PC-3 (cell line): ENCODE measurements at regions of chr17 and their contacts with region 1.

Region 1: DNA sequence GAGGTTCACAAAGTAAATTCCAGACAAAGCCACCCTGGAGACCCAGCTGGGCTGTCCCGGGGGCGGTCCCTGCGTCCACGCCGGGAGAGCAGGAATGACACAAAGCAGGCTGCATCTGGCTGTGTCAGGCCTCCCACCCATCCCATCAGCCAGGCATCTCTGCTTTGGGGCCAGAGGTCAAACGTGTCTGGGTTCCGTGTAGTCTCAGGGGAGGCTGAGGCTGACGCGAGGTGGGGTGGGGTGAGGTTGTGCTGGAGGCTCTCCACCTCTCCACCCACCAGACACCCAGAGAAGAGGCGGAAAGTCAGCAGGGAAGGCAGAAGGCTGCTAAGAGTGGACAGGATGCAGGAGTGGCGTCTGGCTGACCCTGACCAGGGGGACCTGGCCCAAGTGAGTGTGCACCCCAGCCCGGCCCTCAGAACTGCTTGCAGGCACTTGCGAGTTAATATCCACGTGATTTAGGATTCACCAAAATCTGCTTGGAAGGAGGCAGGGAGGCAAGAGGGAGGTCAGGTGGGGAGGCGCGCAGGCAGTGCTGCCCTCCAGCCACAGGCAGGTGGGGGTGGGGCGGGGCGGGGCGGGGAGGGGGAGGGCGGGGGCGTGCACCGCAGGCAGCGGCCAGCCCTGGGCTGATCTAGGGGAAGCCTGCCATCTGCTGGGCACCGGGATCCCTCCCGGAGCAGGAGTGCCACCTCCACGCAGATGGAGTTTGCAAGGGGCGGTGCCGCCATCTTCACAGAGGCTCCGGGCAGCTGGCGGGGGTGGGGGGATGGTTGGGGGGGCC is 44.3 kb downstream of the TBC1D16 start:
- DNase-seq: peak; percentile 92
- ATAC-seq: peak; percentile 77
- H3K4me3 ChIP-seq: peak overlapping the region; percentile 74
- H3K27ac ChIP-seq: no peak overlapping the region
- H3K4me1 ChIP-seq: peaks cover 43% of the 10 kb centered on the region
- H3K27me3 ChIP-seq: no peaks in the 10 kb centered on the region
- CTCF ChIP-seq: peak; percentile 42

Region 2: GRCh38 chr17:79810130-79811010 is 181.0 kb before region 1 on chr17:
- CTCF ChIA-PET with region 1: interaction called, 3 read pairs
- POLR2A ChIA-PET with region 1: no interaction called
- intact Hi-C with region 1: loop called (anchors 1 kb)
- DNase-seq: peak; percentile 93
- ATAC-seq: peak; percentile 81
- H3K4me3 ChIP-seq: peak overlapping the region; percentile 59
- H3K27ac ChIP-seq: no peak overlapping the region
- H3K4me1 ChIP-seq: peaks cover 29% of the 10 kb centered on the region
- H3K27me3 ChIP-seq: peaks cover 62% of the 10 kb centered on the region
- CTCF ChIP-seq: no peak

Region 3: GRCh38 chr17:79844869-79845600 is 146.3 kb before region 1 on chr17:
- CTCF ChIA-PET with region 1: interaction called, 9 read pairs
- POLR2A ChIA-PET with region 1: no interaction called
- intact Hi-C with region 1: loop called (anchors 1 kb)
- DNase-seq: peak; percentile 63
- ATAC-seq: peak; percentile 55
- H3K4me3 ChIP-seq: peak overlapping the region; percentile 82
- H3K27ac ChIP-seq: no peak overlapping the region
- H3K4me1 ChIP-seq: peaks cover 28% of the 10 kb centered on the region
- H3K27me3 ChIP-seq: peaks cover 38% of the 10 kb centered on the region
- CTCF ChIP-seq: peak; percentile 72

Region 4: GRCh38 chr17:79933863-79934652 is 57.3 kb before region 1 on chr17:
- CTCF ChIA-PET with region 1: no interaction called
- POLR2A ChIA-PET with region 1: no interaction called
- intact Hi-C with region 1: loop called (anchors 5 kb)
- DNase-seq: peak; percentile 73
- ATAC-seq: peak; percentile 83
- H3K4me3 ChIP-seq: no peak overlapping the region
- H3K27ac ChIP-seq: no peak overlapping the region
- H3K4me1 ChIP-seq: peaks cover 15% of the 10 kb centered on the region
- H3K27me3 ChIP-seq: peaks cover 20% of the 10 kb centered on the region
- CTCF ChIP-seq: peak; percentile 38; the same call in 1 of the 2 replicates